CD8-positive, alpha-beta T cell (primary cell): ENCODE measurements at regions of chr7 and their contacts with region 1.

Region 1: DNA sequence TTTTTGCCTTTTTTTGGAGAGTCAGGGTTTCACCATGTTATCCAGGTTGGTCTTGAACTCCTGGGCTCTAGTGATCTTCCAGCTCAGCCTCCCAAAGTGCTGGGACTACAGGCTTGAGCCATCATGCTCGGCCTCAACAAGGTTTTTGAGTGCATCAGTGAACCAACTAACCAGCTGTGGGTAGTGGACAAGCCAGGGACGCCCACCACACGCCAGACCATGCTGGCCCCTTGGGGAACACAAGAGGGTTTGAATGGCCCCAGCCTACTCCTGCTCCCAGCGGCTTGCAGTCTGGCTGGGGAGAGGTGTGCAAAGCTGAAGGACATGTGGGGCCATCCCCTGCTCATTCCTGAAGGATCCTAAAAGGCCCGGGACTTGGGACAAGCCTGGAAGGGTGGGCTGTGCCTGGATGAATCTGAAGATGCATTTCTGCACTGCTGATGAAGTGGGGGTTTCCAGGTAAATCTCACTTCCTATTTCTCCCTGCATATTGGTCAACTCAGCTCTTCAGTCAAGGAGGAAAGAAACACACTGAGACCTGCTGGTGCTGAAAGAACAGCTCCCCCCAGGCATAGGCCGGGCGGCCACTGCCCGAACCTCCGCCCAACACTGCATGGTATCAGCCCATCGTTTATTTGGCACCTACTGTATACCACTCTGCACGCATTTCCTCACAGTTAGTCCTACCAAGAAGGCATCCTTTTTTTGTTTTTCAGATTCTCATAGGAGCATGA is 6.9 kb downstream of the MMD2 start:
- DNase-seq: no peak
- ATAC-seq: no peak
- H3K4me3 ChIP-seq: no peak overlapping the region
- H3K4me3 Mint-ChIP-seq: no peak overlapping the region
- H3K27ac ChIP-seq: no peak overlapping the region
- H3K27ac Mint-ChIP-seq: no peak overlapping the region
- H3K4me1 ChIP-seq: no peaks in the 10 kb centered on the region
- H3K4me1 Mint-ChIP-seq: no peaks in the 10 kb centered on the region
- H3K27me3 ChIP-seq: peaks cover 0 to 7% of the 10 kb centered on the region in 2 experiments
- H3K27me3 Mint-ChIP-seq: peaks cover 42% of the 10 kb centered on the region
- CTCF ChIP-seq: no peak

Region 2: DNA sequence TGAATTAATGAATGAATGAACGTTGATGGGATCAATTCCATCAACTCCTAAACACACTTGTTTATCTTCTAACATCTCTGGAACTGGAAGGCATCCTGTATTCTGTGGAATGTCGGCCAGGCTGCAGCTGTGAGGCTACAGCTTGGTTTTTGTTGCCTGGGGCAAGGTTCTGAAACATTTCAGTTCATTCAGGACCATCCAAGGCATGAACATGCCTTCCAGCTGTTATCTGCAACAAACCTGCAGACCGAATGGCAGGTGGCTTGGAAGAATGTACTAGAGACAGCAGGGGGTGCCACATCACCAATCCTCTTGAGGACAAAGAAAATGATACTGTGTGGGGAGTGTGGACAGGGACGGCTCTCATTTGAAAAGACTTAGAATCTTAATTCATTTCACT is 102.7 kb before region 1 on chr7:
- CTCF ChIA-PET with region 1: no interaction called
- POLR2A ChIA-PET with region 1: no interaction called
- intact Hi-C with region 1: loop called in 1 of 2 experiments (anchors 10 kb)
- DNase-seq: peak in 3 of 9 experiments; percentile 19 to 55 (median 45)
- ATAC-seq: peak; percentile 64
- H3K4me3 ChIP-seq: no peak overlapping the region
- H3K4me3 Mint-ChIP-seq: no peak overlapping the region
- H3K27ac ChIP-seq: no peak overlapping the region
- H3K27ac Mint-ChIP-seq: no peak overlapping the region
- H3K4me1 ChIP-seq: no peaks in the 10 kb centered on the region
- H3K4me1 Mint-ChIP-seq: peaks cover 2% of the 10 kb centered on the region
- H3K27me3 ChIP-seq: no peaks in the 10 kb centered on the region
- H3K27me3 Mint-ChIP-seq: peaks cover 16% of the 10 kb centered on the region
- CTCF ChIP-seq: peak; percentile 13